Posterior vena cava (tissue), 2 donors: ENCODE measurements at regions of chr9 and their contacts with region 1.

Region 1: GRCh38 chr9:136327313-136327974 is at the start of gene GPSM1:
- DNase-seq: no peak
- total RNA-seq, gene GPSM1: 13.8 to 17.0 TPM

Region 2: DNA sequence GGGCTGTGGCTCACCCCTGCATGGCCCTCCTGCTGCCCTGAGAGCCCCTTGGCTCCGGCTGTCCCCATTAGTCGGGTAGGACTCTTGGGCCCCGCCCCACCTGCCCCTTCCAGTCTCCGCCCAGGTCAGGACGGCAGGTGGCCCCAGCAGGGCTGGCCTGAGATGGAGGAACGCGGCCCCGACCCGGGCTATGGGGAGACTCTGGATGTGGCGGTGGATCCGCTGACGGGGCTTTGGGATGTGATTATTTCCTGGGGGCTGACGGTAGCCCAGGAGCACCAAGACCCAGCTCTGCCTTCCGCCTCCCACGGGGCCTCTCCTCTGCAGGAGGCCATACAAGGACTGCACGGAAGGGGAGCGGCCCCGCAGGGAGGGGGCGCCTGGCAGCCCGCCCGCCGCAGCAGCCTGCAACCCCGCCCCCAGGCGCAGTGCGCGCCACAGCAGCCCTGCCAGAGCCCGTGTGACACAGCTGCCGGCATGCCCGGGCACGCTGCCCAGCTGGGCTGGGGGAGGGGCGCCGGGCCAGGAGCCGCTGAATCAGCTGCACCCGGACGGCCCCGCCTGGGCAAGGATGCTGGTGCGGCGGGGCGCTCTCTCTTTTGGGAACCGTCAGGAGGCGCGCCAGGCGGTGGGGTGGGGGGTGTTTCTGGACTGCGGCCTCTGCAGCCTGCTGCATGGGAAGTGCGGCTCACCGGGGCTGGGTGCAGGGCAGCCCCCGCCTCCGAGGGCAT is 217.9 kb before region 1 on chr9:
- intact Hi-C with region 1: no loop called
- DNase-seq: peak; percentile 97

Region 3: DNA sequence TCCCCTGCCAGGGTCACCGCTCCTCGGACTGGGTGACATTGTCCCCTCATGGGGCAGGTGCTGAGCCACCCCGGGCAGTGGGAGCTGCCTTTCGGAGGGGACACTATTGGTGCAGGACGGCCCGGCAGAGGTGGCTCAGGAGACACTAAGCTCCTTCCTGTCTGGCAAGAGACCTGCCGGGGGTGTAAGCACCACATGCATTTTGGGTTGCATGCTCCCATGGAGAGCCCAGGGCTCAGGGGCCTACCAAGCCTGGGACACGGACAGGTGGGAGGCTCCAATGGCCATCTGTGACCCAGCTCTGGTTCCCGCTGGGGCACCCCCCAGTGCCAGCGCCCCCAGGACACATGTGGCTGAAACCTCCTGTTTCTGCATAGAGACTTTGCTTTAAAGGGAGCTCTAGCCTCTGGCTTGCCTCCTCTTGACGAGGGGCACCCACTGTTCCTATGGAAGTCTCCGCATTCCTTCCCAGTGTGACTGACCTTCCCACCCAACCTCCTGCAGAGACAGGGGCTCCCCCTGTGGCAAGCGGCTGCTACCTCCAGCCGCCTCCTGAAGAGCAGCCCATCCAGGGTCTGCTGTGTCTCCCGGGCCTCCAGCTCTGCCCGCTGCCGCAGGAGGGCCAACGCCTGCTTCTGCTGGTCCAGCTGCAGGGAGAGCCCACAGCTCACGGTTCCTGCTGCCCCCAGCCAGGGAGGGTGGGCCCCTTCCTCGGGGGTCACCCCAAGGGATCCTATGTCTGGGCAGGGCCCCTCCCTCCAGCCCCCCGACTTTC is 51.6 kb before region 1 on chr9:
- intact Hi-C with region 1: loop called in 1 of 2 experiments (anchors 2 kb)
- DNase-seq: no peak

Region 4: DNA sequence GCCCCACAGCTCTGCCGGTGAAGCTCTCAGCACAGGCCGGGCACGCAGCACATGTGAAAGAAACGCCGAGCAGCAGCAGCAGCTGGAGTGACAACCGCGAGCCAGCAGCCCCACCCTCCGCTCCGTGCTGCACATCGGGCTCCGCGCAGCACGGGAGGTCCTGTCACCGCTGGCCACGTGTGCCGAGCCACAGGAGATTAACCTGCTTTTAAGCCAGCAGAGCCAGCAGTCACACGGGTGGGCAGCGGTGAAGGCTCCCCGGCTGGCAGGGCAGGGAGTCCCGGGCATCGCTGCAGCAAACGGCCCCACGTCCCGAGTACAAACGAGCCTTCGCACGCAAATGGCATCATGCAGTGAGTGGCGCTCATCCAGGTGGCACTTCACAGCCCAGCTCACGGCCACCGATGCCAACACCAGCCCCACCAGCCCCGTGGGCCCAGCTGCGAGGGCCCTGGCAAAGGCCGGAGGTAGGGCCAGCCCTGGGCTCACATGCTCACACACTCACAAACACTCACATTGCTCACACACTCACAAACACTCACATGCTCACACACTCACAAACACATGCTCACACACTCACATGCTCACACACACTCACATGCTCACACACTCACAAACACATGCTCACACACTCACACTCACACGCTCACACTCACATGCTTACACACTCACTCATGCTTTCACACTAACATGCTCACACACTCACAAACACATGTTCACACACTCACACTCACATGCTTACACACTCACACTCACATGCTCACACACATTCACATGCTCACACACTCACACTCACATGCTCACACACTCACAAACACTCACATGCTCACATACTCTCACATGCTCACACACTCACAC is 34.6 kb before region 1 on chr9:
- intact Hi-C with region 1: loop called in 1 of 2 experiments (anchors 1 kb)
- DNase-seq: no peak

Region 5: GRCh38 chr9:137960496-137960895 is 1633.1 kb after region 1 on chr9:
- intact Hi-C with region 1: no loop called
- DNase-seq: peak; percentile 72